B cell (primary cell): ENCODE measurements at regions of chr9 and their contacts with region 1.

Region 1: DNA sequence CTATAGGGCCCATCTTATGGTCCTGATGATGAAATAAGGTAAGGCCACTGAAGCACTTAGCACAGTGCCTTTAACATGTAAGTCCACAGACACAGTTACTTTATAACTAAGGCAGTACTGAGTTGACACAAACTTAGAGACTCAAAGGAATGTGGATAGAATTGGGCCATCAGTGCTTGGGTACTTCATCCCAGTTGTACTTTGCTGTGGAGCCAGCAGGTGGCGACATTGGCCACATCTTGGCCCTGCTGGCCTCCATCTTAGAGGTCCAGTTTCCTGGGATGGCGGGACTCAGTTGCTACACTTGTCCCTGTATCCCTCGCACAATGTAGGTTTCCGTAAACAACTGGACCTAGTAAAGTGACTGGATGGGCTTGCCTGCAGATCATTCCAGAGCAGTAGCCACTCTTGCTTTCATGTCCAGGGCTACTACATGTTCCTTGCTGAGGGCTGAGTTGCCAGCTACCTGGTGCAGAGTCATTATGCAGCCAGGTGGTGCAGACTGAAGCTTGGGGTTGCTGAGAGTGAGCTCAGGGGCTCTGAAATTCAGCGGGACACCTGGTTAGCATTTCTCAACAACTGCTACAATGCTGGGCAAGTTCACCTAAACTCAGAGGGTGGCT is 10.6 kb downstream of the MTAP start:
- DNase-seq: peak; percentile 78
- ATAC-seq: peak; percentile 80
- H3K4me3 ChIP-seq: no peak overlapping the region
- H3K4me3 Mint-ChIP-seq: peak overlapping the region; percentile 19
- H3K27ac ChIP-seq: peak overlapping the region in 1 of 2 donors; percentile 10
- H3K27ac Mint-ChIP-seq: peak overlapping the region; percentile 11
- H3K4me1 ChIP-seq: peaks cover 9 to 11% of the 10 kb centered on the region in 2 donors
- H3K4me1 Mint-ChIP-seq: peaks cover 22% of the 10 kb centered on the region
- H3K27me3 ChIP-seq: no peaks in the 10 kb centered on the region
- H3K27me3 Mint-ChIP-seq: no peaks in the 10 kb centered on the region
- CTCF ChIP-seq: peak; percentile 85

Region 2: DNA sequence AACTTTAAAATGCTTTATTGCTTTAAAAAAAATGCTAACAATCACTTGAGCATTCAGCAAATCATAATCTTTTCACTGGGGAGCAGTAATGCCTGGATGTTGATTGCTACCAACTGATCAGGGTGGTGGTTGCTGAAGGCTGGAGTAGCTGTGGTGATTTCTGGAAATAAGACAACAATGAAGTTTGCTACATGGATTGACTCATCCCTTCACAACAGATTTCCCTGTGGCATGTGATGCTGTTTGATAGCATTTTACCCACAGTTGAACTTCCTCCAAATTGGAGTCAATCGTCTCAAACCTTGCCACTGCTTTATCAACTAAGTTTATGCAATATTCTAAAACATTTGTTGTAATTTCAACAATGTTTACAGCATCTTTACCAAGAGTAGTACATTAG is 1274.1 kb before region 1 on chr9:
- CTCF ChIA-PET with region 1: no interaction called
- POLR2A ChIA-PET with region 1: no interaction called
- intact Hi-C with region 1: no loop called
- DNase-seq: no peak
- ATAC-seq: no peak
- H3K4me3 ChIP-seq: no peak overlapping the region
- H3K4me3 Mint-ChIP-seq: no peak overlapping the region
- H3K27ac ChIP-seq: no peak overlapping the region
- H3K27ac Mint-ChIP-seq: no peak overlapping the region
- H3K4me1 ChIP-seq: no peaks in the 10 kb centered on the region
- H3K4me1 Mint-ChIP-seq: no peaks in the 10 kb centered on the region
- H3K27me3 ChIP-seq: no peaks in the 10 kb centered on the region
- H3K27me3 Mint-ChIP-seq: no peaks in the 10 kb centered on the region
- CTCF ChIP-seq: no peak

Region 3: DNA sequence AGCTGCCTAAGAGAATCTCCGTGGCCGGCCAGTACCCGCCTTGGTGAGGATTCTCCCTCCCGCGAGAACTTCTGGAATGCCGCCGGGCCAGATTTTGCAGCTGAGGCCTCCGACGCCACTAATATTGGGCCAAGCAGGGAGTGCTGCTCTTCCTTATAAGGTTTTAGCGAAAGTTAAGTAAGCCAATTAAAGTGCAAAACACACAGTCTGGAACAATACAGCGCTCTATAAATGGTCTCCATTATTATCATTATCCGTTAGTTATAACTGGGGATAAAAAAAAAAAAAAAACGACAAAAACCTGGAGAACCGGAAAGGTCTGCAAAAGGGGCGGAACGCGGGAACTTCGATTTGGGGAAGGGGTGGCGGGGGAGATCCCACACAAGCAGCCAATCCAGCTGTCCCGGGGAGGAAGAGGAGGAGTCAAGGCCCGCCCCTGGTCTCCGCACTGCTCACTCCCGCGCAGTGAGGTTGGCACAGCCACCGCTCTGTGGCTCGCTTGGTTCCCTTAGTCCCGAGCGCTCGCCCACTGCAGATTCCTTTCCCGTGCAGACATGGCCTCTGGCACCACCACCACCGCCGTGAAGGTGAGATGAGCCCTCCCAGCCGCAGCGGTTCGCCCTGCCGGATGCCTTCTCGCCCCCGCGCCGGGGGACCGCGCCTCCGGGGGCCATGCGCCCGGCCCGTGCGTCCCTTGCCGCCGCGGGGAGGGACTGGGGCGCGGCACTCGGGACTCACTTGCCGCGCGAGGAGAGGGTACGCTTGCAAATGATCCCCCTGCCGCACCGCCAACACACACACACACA is 10.7 kb before region 1 on chr9 and contains the start of gene MTAP:
- CTCF ChIA-PET with region 1: interaction called, 41 read pairs
- POLR2A ChIA-PET with region 1: no interaction called
- intact Hi-C with region 1: loop called (anchors 1 kb)
- DNase-seq: peak; percentile 80
- ATAC-seq: peak; percentile 88
- H3K4me3 ChIP-seq: peak within 1 kb of the TSS; percentile 68 to 94 (median 84)
- H3K4me3 Mint-ChIP-seq: peak within 1 kb of the TSS; percentile 99
- H3K27ac ChIP-seq: peak within 1 kb of the TSS; percentile 24 to 71
- H3K27ac Mint-ChIP-seq: peak within 1 kb of the TSS; percentile 83
- H3K4me1 ChIP-seq: peaks cover 24 to 25% of the 10 kb centered on the region in 2 donors
- H3K4me1 Mint-ChIP-seq: peaks cover 48% of the 10 kb centered on the region
- H3K27me3 ChIP-seq: peaks cover 0 to 9% (median 2%) of the 10 kb centered on the region in 4 experiments
- H3K27me3 Mint-ChIP-seq: peaks cover 13% of the 10 kb centered on the region
- CTCF ChIP-seq: no peak
- total RNA-seq, gene MTAP: 28.8 and 38.4 TPM in 2 replicates

Region 4: DNA sequence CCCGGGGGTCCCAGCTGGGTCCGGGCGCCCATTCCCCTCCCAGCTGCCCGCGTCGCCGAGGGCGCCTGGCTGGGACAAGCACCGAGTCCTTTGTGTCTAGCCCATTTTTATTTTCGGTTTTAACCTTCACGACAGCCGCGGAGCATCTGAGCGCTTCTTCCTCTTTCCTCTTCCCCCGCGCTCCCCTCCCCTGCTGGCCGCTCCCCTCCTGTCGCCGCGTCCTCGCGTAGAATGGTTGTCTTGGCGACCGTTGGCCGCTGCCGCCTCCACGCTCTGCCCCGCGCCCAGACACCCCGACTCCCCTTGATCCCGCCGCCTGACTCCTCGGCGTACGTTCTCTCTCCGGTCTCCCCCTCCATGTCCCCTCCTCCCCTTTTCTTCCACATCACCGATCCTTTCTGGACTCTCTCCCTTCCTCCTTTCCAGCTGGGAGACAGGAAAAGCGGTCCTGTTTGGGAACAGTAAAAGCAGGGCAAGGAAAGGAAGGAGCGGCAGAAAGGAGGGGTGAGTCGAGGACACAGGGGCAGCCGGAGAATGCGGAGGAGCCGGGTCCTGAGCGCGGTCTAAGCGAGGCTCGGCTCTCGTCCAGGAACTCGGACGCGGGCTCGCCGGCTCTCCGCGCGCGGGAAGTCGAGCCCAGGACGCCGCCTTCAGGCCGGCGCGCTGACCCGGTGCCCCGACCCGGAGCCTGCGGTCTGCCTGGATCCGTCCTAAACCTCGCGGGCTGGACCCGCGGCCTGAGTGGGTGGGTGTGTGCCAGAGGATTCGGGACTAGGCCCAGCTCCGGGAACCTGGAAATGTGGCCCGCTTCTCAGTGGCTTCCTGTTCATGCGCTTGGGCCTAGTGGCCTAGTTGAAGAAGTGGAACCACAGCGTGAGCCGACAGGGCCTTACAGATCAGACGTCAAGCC is 182.4 kb after region 1 on chr9:
- CTCF ChIA-PET with region 1: interaction called, 5 read pairs
- POLR2A ChIA-PET with region 1: interaction called, 4 read pairs
- intact Hi-C with region 1: loop called (anchors 1 kb)
- DNase-seq: peak; percentile 96
- ATAC-seq: peak; percentile 78
- H3K4me3 ChIP-seq: peak overlapping the region; percentile 76 to 97 (median 86)
- H3K4me3 Mint-ChIP-seq: peak overlapping the region; percentile 97
- H3K27ac ChIP-seq: peak overlapping the region; percentile 87 to 94
- H3K27ac Mint-ChIP-seq: peak overlapping the region; percentile 95
- H3K4me1 ChIP-seq: peaks cover 18 to 19% of the 10 kb centered on the region in 2 donors
- H3K4me1 Mint-ChIP-seq: peaks cover 19% of the 10 kb centered on the region
- H3K27me3 ChIP-seq: peaks cover 0 to 11% (median 2%) of the 10 kb centered on the region in 4 experiments
- H3K27me3 Mint-ChIP-seq: no peaks in the 10 kb centered on the region
- CTCF ChIP-seq: peak; percentile 15

Region 5: DNA sequence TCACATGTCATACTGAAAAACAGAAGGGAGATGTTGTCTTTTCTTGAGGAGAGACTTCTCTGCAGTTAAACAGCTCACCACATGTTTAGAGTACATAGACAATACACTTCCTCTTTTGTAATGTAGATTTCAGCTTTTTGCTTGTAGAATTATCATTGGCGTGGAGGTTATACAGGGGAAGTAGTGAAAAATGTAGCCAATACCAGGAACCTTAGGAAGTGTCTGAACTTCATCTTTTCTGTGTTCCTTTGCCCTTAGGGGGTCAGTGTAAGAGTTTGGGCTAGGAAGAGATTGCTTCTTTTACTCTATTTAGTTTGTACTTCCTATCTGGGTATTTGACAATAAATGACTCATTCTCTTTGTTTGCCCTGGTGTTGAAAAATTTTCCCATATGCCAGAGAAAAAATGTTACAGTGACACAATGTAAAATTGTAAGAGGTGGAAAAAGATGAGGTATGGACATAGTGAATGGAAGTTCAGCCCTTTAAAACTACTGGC is 217.1 kb after region 1 on chr9:
- CTCF ChIA-PET with region 1: interaction called, 217 read pairs
- POLR2A ChIA-PET with region 1: no interaction called
- intact Hi-C with region 1: no loop called
- DNase-seq: peak; percentile 52
- ATAC-seq: peak; percentile 53
- H3K4me3 ChIP-seq: no peak overlapping the region
- H3K4me3 Mint-ChIP-seq: no peak overlapping the region
- H3K27ac ChIP-seq: no peak overlapping the region
- H3K27ac Mint-ChIP-seq: no peak overlapping the region
- H3K4me1 ChIP-seq: peaks cover 3 to 6% of the 10 kb centered on the region in 2 donors
- H3K4me1 Mint-ChIP-seq: peaks cover 8% of the 10 kb centered on the region
- H3K27me3 ChIP-seq: no peaks in the 10 kb centered on the region
- H3K27me3 Mint-ChIP-seq: no peaks in the 10 kb centered on the region
- CTCF ChIP-seq: no peak

Region 6: DNA sequence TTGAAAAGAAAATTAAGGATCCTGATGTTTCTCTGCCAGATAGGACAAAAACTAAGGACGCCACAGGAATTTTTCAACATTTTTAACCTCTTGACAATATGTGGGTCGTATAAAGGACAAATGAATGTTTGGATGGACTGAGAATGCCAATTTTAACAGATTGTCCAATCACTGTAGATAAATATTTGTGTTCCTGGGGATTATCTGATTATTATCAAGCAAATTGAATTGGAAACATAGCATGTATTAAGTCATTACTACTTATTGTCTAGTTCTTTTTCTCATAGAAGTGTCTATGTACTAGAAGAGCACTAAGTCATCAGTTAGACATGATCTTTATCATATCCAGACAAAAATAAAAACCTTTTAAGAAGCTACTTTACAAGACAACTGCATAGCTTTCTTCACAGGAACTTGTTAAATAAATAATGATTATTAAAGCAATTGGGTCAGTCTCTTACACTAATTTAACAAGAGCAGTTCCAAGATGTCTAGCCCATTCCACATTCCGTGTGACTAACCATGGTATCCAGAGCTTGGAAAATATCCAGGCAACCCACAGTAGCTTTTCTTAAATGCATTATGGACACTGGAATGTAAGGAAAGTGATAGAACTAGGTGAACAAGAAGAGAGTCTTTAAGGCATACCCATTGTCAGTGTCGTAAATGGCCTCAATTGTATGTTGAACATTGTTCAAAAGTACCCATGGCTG is 323.6 kb after region 1 on chr9:
- CTCF ChIA-PET with region 1: no interaction called
- POLR2A ChIA-PET with region 1: no interaction called
- intact Hi-C with region 1: no loop called
- DNase-seq: no peak
- ATAC-seq: no peak
- H3K4me3 ChIP-seq: no peak overlapping the region
- H3K4me3 Mint-ChIP-seq: no peak overlapping the region
- H3K27ac ChIP-seq: no peak overlapping the region
- H3K27ac Mint-ChIP-seq: no peak overlapping the region
- H3K4me1 ChIP-seq: peaks cover 5 to 6% of the 10 kb centered on the region in 2 donors
- H3K4me1 Mint-ChIP-seq: peaks cover 8% of the 10 kb centered on the region
- H3K27me3 ChIP-seq: peaks cover 0 to 5% (median 2%) of the 10 kb centered on the region in 4 experiments
- H3K27me3 Mint-ChIP-seq: peaks cover 3% of the 10 kb centered on the region
- CTCF ChIP-seq: no peak

Region 7: GRCh38 chr9:22198681-22199080 is 385.6 kb after region 1 on chr9:
- CTCF ChIA-PET with region 1: interaction called, 6 read pairs
- POLR2A ChIA-PET with region 1: no interaction called
- intact Hi-C with region 1: loop called (anchors 5 kb)
- DNase-seq: no peak
- ATAC-seq: no peak
- H3K4me3 ChIP-seq: peak overlapping the region in 1 of 5 experiments; percentile 21
- H3K4me3 Mint-ChIP-seq: peak overlapping the region; percentile 6
- H3K27ac ChIP-seq: no peak overlapping the region
- H3K27ac Mint-ChIP-seq: no peak overlapping the region
- H3K4me1 ChIP-seq: peaks cover 38 to 43% of the 10 kb centered on the region in 2 donors
- H3K4me1 Mint-ChIP-seq: peaks cover 55% of the 10 kb centered on the region
- H3K27me3 ChIP-seq: no peaks in the 10 kb centered on the region
- H3K27me3 Mint-ChIP-seq: no peaks in the 10 kb centered on the region
- CTCF ChIP-seq: no peak

Region 8: GRCh38 chr9:22238809-22239684 is 426.0 kb after region 1 on chr9:
- CTCF ChIA-PET with region 1: interaction called, 174 read pairs
- POLR2A ChIA-PET with region 1: no interaction called
- intact Hi-C with region 1: loop called (anchors 1 kb)
- DNase-seq: peak; percentile 58
- ATAC-seq: no peak
- H3K4me3 ChIP-seq: no peak overlapping the region
- H3K4me3 Mint-ChIP-seq: no peak overlapping the region
- H3K27ac ChIP-seq: no peak overlapping the region
- H3K27ac Mint-ChIP-seq: peak overlapping the region; percentile 27
- H3K4me1 ChIP-seq: peaks cover 32 to 38% of the 10 kb centered on the region in 2 donors
- H3K4me1 Mint-ChIP-seq: peaks cover 56% of the 10 kb centered on the region
- H3K27me3 ChIP-seq: no peaks in the 10 kb centered on the region
- H3K27me3 Mint-ChIP-seq: no peaks in the 10 kb centered on the region
- CTCF ChIP-seq: peak; percentile 58

Region 9: GRCh38 chr9:22363421-22363887 is 550.4 kb after region 1 on chr9:
- CTCF ChIA-PET with region 1: no interaction called
- POLR2A ChIA-PET with region 1: no interaction called
- intact Hi-C with region 1: no loop called
- DNase-seq: no peak
- ATAC-seq: no peak
- H3K4me3 ChIP-seq: no peak overlapping the region
- H3K4me3 Mint-ChIP-seq: no peak overlapping the region
- H3K27ac ChIP-seq: no peak overlapping the region
- H3K27ac Mint-ChIP-seq: no peak overlapping the region
- H3K4me1 ChIP-seq: no peaks in the 10 kb centered on the region
- H3K4me1 Mint-ChIP-seq: no peaks in the 10 kb centered on the region
- H3K27me3 ChIP-seq: no peaks in the 10 kb centered on the region
- H3K27me3 Mint-ChIP-seq: no peaks in the 10 kb centered on the region
- CTCF ChIP-seq: no peak

Region 10: DNA sequence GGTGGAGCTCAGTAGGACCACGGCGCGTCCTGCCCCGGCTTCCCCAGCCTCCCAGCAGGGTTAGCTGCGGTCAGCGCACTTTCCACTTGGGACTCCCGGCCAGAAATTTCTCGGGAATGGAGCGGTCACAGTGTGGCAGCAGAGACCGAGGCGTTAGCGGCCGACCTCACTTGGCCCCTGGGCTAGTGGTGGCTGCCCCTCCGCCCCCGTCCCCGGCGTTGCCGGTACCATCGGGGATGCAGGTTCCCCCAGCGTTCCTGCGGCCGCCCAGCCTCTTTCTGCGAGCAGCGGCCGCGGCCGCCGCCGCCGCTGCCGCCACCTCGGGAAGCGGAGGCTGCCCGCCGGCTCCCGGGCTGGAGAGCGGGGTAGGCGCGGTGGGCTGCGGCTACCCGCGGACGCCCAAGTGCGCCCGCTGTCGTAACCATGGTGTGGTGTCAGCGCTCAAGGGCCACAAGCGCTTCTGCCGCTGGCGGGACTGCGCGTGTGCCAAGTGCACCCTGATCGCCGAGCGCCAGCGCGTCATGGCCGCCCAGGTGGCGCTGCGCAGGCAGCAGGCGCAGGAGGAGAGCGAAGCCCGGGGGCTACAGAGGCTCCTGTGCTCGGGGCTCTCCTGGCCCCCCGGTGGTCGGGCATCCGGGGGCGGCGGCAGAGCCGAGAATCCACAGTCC is 634.0 kb after region 1 on chr9:
- CTCF ChIA-PET with region 1: interaction called, 168 read pairs
- POLR2A ChIA-PET with region 1: interaction called, 5 read pairs
- intact Hi-C with region 1: loop called (anchors 1 kb)
- DNase-seq: peak; percentile 64
- ATAC-seq: peak; percentile 78
- H3K4me3 ChIP-seq: peak overlapping the region in 4 of 5 experiments; percentile 21 to 57 (median 46)
- H3K4me3 Mint-ChIP-seq: peak overlapping the region; percentile 68
- H3K27ac ChIP-seq: no peak overlapping the region
- H3K27ac Mint-ChIP-seq: no peak overlapping the region
- H3K4me1 ChIP-seq: peaks cover 11 to 20% of the 10 kb centered on the region in 2 donors
- H3K4me1 Mint-ChIP-seq: peaks cover 12% of the 10 kb centered on the region
- H3K27me3 ChIP-seq: peaks cover 0 to 44% (median 23%) of the 10 kb centered on the region in 4 experiments
- H3K27me3 Mint-ChIP-seq: peaks cover 60% of the 10 kb centered on the region
- CTCF ChIP-seq: peak; percentile 15